Naive thymus-derived CD4-positive, alpha-beta T cell (primary cell): ENCODE measurements at regions of chr19 and their contacts with region 1.

Region 1: DNA sequence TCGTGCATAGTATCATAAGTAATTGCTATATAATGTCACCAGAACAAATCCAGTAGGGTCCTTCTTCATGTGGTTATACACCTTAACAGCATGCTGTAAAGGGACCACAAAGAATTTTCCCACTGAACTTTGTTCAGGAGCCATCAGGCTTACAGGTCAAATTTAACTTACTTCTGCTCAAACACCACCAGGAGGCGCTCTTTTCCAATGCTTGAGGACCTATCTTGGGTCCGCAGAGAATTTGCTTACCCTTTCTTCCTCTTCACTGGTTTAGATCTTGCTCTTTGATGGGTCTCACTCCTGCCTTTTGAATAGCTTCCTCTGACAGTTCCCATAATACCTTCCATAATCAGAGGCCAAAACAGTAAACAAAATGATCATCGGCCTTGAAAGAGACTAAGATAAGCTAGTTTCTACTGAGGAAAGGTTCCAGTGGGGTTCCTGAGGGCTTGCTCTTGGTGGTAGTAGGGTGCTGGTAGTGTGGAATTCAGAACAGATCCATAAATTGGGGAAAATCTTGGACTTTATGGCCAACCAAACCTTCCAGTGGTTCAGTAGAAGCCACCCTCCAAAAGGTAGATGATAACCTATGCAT is 37.4 kb downstream of the SCGB2B2 start:
- DNase-seq: peak in 8 of 9 donors; percentile 49 to 73 (median 64)
- ATAC-seq: peak; percentile 64
- H3K4me3 ChIP-seq: no peak overlapping the region
- H3K4me3 Mint-ChIP-seq: no peak overlapping the region
- H3K27ac ChIP-seq: no peak overlapping the region
- H3K27ac Mint-ChIP-seq: no peak overlapping the region
- H3K4me1 ChIP-seq: no peaks in the 10 kb centered on the region
- H3K4me1 Mint-ChIP-seq: peaks cover 0 to 6% (median 0%) of the 10 kb centered on the region in 7 donors
- H3K27me3 ChIP-seq: no peaks in the 10 kb centered on the region
- H3K27me3 Mint-ChIP-seq: peaks cover 0 to 3% (median 0%) of the 10 kb centered on the region in 5 donors

Region 2: GRCh38 chr19:34662919-34663318 is 23.3 kb after region 1 on chr19:
- CTCF ChIA-PET with region 1: no interaction called
- POLR2A ChIA-PET with region 1: no interaction called
- intact Hi-C with region 1: loop called (anchors 1 kb)
- DNase-seq: peak in 7 of 9 donors; percentile 44 to 69 (median 54)
- ATAC-seq: peak; percentile 95
- H3K4me3 ChIP-seq: no peak overlapping the region
- H3K4me3 Mint-ChIP-seq: peak overlapping the region in 4 of 10 donors; percentile 0 to 50 (median 14)
- H3K27ac ChIP-seq: no peak overlapping the region
- H3K27ac Mint-ChIP-seq: peak overlapping the region in 7 of 9 donors; percentile 6 to 65 (median 30)
- H3K4me1 ChIP-seq: peaks cover 6% of the 10 kb centered on the region in 2 donors
- H3K4me1 Mint-ChIP-seq: peaks cover 11 to 34% (median 22%) of the 10 kb centered on the region in 7 donors
- H3K27me3 ChIP-seq: no peaks in the 10 kb centered on the region
- H3K27me3 Mint-ChIP-seq: peaks cover 0 to 7% (median 0%) of the 10 kb centered on the region in 5 donors

Region 3: DNA sequence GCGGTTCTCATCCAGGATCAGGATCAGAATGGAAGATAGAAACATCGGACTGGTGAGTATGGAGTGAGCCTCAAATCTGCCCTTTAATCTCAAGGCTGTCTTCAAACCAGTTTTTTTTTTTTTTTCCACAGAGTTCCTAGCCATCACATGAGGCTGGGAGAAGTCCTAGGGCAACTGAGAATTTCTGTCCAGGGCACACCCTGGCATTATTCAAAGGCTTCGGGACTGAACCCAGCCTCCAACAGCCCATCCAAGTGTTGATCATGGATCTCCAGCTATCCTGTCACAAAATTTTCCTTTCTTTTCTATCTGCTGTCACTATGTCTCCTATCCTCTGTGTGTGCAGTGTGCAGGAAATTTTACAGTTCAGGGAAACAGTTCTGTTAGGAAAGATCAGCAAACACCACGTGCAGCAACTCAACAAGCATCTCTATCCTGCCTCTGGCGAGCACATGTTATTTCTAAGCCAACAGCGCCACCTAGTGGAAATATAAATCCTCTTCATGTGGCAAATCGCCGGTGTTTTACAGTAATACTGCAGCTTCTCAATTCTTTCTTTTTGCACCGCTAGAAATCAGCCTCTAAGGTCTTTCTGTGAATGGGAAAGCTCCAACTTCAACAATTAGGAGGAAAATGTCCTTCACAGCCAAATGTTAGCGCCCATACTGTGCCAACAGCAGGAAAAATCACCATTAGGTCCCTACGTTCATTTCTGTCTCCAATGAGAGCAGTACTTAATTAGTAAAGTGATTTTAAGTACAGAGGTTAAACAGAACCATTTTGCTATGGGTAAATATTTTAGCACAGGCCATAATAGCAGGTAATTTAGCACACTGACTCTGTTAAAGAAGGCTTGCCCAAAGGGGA is 73.0 kb after region 1 on chr19:
- CTCF ChIA-PET with region 1: interaction called, 54 read pairs
- POLR2A ChIA-PET with region 1: no interaction called
- intact Hi-C with region 1: loop called in 1 of 2 experiments (anchors 1 kb)
- DNase-seq: peak in 8 of 9 donors; percentile 41 to 79 (median 70)
- ATAC-seq: peak; percentile 67
- H3K4me3 ChIP-seq: no peak overlapping the region
- H3K4me3 Mint-ChIP-seq: no peak overlapping the region
- H3K27ac ChIP-seq: no peak overlapping the region
- H3K27ac Mint-ChIP-seq: no peak overlapping the region
- H3K4me1 ChIP-seq: no peaks in the 10 kb centered on the region
- H3K4me1 Mint-ChIP-seq: peaks cover 0 to 6% (median 2%) of the 10 kb centered on the region in 7 donors
- H3K27me3 ChIP-seq: no peaks in the 10 kb centered on the region
- H3K27me3 Mint-ChIP-seq: peaks cover 3 to 50% (median 18%) of the 10 kb centered on the region in 5 donors

Region 4: DNA sequence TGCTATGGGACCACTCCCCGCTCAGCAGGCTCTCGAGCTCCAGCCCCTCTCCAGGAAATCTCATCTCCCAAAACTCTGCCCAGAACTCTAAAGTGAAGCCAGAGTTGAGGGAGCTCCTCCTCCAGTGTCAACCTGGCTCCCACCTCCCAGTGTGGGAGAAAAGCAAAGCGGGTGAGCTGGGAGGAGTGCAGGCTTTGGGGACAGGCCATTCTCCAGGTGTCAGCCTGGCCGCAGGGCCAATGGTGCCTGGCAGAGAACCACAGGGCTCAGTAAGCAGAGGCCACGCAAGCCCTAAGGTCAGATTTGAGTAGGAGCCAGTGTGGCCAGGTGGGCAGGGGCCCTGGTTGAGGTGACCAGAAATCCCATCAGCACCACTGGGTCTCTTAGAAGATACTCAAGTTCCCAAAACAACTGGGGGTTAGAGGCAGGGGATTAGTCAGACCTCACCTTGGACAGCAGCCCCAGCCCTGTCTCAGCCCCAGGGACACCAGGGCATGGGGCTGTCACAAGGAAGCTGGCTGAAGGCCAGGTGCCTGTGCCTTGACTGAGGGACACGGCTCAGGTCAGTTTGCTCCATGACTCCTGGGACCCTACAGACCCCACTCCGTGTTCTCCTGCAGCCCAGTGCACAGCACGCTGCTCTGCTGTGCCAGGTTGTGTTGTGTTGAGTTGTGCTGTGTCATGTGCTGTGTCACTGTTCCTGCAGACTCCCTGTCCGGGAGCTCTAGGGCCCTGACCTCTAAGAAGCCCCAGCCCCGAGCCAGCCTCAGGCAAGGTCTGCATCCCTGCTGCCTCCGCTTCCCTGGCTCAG is 91.6 kb after region 1 on chr19:
- CTCF ChIA-PET with region 1: no interaction called
- POLR2A ChIA-PET with region 1: no interaction called
- intact Hi-C with region 1: no loop called
- DNase-seq: no peak
- ATAC-seq: no peak
- H3K4me3 ChIP-seq: no peak overlapping the region
- H3K4me3 Mint-ChIP-seq: peak overlapping the region in 5 of 10 donors; percentile 5 to 66 (median 25)
- H3K27ac ChIP-seq: no peak overlapping the region
- H3K27ac Mint-ChIP-seq: peak overlapping the region in 1 of 9 donors; percentile 26
- H3K4me1 ChIP-seq: peaks cover 11 to 17% of the 10 kb centered on the region in 2 donors
- H3K4me1 Mint-ChIP-seq: peaks cover 12 to 31% (median 25%) of the 10 kb centered on the region in 7 donors
- H3K27me3 ChIP-seq: no peaks in the 10 kb centered on the region
- H3K27me3 Mint-ChIP-seq: peaks cover 9 to 23% (median 20%) of the 10 kb centered on the region in 5 donors

Region 5: GRCh38 chr19:34838753-34839431 is 199.3 kb after region 1 on chr19:
- CTCF ChIA-PET with region 1: no interaction called
- POLR2A ChIA-PET with region 1: no interaction called
- intact Hi-C with region 1: loop called in 1 of 2 experiments (anchors 10 kb)
- DNase-seq: peak in 5 of 9 donors; percentile 18 to 44 (median 37)
- ATAC-seq: peak; percentile 55
- H3K4me3 ChIP-seq: no peak overlapping the region
- H3K4me3 Mint-ChIP-seq: peak overlapping the region; percentile 5 to 78 (median 66)
- H3K27ac ChIP-seq: peak overlapping the region; percentile 17
- H3K27ac Mint-ChIP-seq: peak overlapping the region in 7 of 9 donors; percentile 13 to 82 (median 53)
- H3K4me1 ChIP-seq: no peaks in the 10 kb centered on the region
- H3K4me1 Mint-ChIP-seq: peaks cover 6 to 33% (median 23%) of the 10 kb centered on the region in 7 donors
- H3K27me3 ChIP-seq: peaks cover 0 to 3% of the 10 kb centered on the region in 2 donors
- H3K27me3 Mint-ChIP-seq: peaks cover 0 to 17% (median 0%) of the 10 kb centered on the region in 5 donors

Region 6: DNA sequence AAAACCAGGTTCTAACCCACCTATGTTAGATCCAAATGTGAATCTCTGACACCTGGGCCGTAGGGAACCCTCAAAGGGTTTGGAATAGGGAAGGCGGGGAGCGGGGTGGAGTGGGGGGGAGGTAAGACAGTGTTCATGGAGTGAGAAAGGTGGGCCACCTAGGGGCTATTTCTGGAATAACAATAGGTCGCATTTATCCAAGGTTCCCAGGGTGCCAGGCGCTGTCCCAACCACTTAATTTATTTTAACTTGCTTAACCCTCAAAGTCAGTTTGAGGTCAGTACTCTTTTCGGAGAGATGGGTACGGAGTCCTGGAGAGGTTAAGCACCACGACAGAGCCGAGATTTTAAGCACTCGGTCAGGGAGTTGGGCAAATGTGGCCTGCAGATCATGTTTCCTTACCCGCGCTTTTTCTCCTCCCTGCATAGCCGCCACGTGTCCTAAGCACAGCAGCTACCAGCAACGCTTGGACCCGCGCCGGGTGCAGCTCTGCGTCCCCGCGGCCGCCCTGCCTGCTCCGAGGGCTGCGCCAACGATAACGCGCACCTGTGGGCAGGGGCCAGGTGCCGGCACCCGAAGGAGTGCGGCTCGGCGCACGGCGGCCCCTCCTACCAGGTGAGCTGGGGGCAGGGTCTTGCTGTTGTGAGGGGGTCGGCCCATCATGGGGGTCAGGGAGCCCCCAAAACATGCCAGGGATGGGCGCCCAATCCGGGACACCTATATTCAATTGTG is 451.1 kb after region 1 on chr19:
- CTCF ChIA-PET with region 1: interaction called, 3 read pairs
- POLR2A ChIA-PET with region 1: no interaction called
- intact Hi-C with region 1: loop called in 1 of 2 experiments (anchors 1 kb)
- DNase-seq: peak in 7 of 9 donors; percentile 13 to 43 (median 30)
- ATAC-seq: peak; percentile 80
- H3K4me3 ChIP-seq: no peak overlapping the region
- H3K4me3 Mint-ChIP-seq: peak overlapping the region in 4 of 10 donors; percentile 23 to 56 (median 30)
- H3K27ac ChIP-seq: no peak overlapping the region
- H3K27ac Mint-ChIP-seq: no peak overlapping the region
- H3K4me1 ChIP-seq: peaks cover 7 to 16% of the 10 kb centered on the region in 2 donors
- H3K4me1 Mint-ChIP-seq: peaks cover 0 to 10% (median 4%) of the 10 kb centered on the region in 7 donors
- H3K27me3 ChIP-seq: no peaks in the 10 kb centered on the region
- H3K27me3 Mint-ChIP-seq: peaks cover 0 to 10% (median 3%) of the 10 kb centered on the region in 5 donors